GM10248 (cell line): ENCODE measurements at regions of chr11 and their contacts with region 1.

Region 1: DNA sequence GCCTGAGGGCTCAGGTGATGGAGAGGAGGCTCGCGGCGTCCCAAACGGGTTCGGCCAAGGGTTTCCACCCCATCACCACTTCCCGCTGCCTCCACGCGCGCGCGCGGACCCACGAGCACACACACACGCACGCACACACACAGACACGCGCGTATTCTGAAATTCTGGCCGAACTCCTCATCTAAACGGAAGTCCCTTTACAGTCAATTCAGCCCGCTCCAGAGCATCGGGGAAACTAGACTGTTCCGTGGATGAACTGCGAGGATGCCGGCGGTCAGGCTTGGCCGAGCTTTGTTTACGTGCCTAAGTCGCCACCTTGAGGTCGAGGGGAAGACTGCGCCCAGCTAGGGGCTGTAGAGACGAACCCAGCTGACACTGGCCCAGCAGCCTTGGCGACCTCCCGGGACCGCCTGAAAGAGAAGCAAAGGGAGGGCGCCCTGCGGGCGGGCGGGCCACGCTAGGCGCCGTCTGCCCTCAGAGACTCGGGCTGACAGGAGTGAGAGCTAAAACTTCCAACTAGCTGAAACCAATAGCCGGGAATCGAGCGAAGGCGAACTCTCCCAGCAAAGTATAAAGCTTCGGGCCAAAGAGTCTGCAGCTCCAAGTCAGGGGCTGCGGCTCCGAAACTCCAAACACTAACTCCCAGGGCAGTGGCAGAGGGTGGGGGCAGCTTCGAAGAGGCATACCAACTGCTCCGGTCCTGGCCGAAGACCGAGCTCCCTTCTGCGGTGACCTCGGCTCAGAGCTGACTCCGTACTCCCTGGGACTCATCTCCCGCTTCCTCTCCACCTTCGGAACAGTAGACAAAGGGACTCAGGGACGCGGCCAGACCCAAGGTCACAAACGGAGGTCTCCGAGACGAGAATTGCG is 124.7 kb upstream of the C11orf58 start:
- DNase-seq: peak; percentile 86
- CTCF ChIP-seq: peak; percentile 95

Region 2: GRCh38 chr11:15650105-15650938 is 963.4 kb before region 1 on chr11:
- CTCF ChIA-PET with region 1: interaction called, 33 read pairs
- POLR2A ChIA-PET with region 1: no interaction called
- DNase-seq: peak; percentile 86
- CTCF ChIP-seq: peak; percentile 97

Region 3: DNA sequence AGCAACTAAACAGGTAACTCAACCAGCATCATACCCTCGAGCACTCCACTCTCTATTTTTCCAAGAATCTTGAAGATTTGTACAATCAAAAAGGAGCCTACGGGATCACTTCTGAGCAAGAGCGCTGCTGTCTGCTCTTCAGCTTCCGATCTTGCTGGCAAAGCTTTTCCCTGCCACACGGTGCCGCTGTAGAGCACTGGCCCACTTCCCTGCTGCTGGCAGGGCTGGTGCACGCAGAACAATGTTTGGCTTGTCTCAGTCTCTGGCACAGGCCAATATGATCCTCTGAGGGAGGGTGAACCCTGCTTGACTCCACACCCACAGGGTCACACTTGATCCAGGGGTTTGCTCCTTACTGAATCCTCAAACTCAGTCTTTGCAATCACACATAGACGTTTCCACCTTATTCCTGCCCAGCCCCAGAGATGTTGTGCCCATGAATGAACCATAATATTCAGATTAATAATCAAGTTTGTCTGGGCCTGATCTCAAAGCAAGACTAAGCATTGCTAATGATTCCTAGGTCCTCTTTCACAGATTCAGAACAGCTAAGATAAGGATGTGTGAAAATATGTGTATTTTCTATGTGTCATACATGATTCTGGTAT is 794.0 kb before region 1 on chr11:
- CTCF ChIA-PET with region 1: interaction called, 15 read pairs
- POLR2A ChIA-PET with region 1: no interaction called
- DNase-seq: peak; percentile 54
- CTCF ChIP-seq: peak; percentile 78

Region 4: DNA sequence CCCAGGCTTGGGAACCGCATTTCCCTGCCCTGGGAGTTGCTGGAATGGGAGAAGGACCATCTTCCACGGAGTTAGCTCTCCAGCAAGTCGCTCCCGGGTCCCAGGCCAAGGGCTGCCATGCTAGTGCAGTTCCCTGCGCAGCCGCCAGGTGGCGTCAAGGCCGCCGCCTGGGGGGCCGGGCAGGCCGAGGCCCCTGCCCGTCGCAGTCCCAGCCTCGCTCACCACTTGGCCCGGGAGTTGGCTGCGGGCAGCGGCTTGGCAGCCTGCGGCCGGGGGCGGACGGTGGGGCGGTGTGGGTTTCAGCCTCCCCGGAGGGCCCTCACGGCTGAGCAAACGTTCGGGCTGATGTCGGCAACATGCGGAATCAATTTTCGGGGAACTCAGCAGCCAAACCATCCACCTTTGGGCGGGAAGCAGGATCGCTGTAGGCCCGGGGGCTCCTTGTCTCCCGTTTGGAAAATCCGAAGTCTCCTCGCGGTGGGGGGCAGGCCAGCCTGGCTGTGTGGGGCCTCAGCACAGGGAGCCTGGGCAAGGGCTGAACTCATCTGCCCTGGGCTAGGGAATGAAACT is 672.5 kb before region 1 on chr11:
- CTCF ChIA-PET with region 1: interaction called, 17 read pairs
- POLR2A ChIA-PET with region 1: no interaction called
- DNase-seq: peak; percentile 78
- CTCF ChIP-seq: peak; percentile 68

Region 5: GRCh38 chr11:16587670-16588069 is 26.1 kb before region 1 on chr11:
- CTCF ChIA-PET with region 1: interaction called, 13 read pairs
- POLR2A ChIA-PET with region 1: no interaction called
- DNase-seq: no peak
- CTCF ChIP-seq: no peak